ENCODE measurements at regions of chr7 and their contacts with region 1.

Region 1: DNA sequence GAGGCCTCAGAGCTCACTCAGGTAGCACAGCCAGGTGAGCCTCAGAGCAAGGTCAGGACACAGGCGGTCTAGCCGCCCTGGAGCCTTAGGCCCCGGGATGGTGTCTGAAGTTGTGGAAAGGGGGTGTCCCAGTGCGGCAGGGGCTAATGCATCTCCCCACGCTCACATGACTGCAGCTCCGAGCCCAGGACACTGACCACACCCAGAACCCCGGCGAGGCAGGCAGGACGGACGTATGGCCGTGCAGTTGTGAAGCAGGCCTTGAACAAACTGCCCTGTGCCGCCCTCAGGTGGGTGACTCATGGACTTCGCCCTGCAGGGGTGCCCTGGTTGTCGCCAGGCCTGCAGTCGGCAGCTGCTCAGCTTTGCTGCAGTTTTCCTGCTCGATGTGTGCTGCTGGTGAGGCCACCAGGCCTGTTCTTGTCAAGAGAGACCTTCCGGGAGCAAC is 5.0 kb upstream of the PRKAR1B start:
- DNase-seq: peak; percentile 80

Region 2: DNA sequence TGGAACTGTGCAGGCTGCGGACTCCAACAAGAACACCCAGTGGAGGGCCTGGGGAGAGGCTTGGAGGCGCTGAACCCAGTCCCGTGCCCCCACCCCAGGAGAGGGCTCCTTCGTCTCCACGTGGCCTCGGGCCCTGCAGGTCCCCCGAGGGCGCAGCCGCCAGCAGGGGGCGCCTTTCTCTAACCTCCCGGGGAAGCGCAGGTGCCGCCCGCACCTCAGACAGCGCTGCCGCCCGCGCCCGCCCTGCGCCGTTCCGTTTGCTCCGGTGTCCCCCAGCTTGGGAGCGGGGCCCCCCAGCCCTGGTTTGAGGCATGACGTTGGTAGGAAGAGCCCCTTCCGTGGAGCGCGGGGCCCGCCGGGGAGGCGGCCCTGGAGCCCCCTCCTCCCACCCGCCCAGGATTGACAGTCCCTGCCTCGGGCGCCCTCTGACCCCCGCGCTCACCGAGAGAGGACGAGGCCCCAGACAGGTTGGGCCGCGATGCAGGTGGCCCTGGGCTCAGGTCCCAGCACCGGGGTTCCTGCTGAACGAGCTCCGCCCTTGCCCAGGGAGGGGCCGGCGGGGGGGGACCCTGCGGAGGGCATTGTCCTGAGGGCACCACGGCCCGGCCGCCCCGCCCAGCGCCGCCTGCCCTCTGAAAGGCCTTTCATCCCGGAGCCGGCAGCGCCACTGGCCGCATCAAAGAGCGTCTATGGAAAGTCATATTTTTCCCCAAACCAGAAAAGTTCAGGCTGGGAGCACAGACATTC is 399.3 kb before region 1 on chr7:
- intact Hi-C with region 1: loop called (anchors 5 kb)
- DNase-seq: no peak

Region 3: DNA sequence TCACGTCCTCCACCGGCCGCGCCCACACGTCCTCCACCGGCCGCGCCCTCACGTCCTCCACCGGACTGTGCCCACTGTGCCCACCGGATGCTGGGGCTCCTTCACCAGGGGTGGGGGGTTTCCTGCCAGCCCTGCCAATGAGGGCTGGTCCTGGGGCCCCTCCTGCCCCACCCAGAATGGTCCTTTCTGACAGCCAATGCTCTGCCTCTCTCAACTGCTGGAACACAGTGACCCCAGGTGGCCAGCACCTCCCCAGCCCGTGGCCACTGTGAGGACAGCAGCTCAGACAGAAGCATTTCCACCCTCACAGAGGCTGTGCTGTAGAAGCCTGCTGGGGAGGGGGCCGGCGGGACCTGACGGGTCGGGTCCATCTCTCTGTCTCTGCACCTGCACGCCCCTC is 95.7 kb before region 1 on chr7:
- intact Hi-C with region 1: loop called (anchors 2 kb)
- DNase-seq: no peak

Region 4: DNA sequence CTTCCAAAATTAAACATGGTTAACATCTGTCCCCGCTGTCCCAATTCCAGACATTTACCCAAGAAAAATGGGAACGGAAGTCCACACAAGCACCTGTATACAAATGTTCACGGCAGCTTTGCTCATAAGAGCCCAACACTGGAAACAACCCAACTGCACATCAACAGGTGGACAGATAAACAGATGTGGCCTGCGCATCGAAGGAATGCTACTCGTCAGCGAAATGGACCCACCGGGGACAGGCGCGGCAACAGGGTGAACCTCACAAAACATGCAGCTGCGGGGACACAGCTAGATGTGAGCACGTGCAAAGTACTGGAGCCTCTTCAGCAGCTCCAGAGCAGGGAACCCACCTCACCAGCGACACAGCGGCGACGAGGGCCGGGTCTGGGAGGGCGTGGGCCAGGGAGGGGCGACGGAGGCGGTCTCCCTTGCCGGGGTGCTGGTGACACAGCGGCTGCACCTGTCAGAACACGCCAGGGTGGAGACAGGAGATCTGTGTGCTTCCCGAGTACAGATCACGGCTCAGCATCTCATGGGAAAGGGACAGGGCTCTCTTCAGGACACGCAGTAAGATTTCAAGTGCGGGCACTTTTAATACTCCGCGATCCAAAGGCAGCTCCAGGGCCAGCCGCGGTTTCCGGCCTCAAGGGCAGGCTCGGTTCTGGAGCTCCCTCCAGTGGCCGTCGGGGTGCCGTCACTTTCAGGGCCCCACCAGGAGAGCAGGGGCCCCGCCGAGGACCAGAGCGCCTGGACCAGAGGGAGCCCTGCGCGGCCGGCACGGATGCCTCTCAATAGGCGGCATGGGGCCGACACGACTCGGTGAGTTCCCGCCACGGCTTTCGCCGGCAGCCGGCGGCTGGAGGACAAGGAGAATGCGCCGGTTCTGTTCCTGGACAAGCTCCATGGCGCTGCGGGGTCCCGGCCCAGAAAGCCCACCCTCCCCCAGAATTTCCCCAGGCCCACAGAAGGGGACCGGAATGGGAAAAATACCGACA is 333.4 kb after region 1 on chr7:
- intact Hi-C with region 1: no loop called
- DNase-seq: peak; percentile 89